Activated B cell treated with CpG ODN at 0.5 μM for 24 hours (primary cell): ENCODE measurements at regions of chr7 and their contacts with region 1.

Region 1: GRCh38 chr7:104943502-104944343 is 70.3 kb upstream of the KMT2E start:
- DNase-seq: peak; percentile 53
- ATAC-seq: peak; percentile 9
- H3K4me3 Mint-ChIP-seq: peak overlapping the region; percentile 98
- H3K27ac Mint-ChIP-seq: peak overlapping the region; percentile 100
- H3K4me1 Mint-ChIP-seq: peaks cover 83% of the 10 kb centered on the region
- H3K27me3 Mint-ChIP-seq: no peaks in the 10 kb centered on the region
- CTCF ChIP-seq: no peak

Region 2: DNA sequence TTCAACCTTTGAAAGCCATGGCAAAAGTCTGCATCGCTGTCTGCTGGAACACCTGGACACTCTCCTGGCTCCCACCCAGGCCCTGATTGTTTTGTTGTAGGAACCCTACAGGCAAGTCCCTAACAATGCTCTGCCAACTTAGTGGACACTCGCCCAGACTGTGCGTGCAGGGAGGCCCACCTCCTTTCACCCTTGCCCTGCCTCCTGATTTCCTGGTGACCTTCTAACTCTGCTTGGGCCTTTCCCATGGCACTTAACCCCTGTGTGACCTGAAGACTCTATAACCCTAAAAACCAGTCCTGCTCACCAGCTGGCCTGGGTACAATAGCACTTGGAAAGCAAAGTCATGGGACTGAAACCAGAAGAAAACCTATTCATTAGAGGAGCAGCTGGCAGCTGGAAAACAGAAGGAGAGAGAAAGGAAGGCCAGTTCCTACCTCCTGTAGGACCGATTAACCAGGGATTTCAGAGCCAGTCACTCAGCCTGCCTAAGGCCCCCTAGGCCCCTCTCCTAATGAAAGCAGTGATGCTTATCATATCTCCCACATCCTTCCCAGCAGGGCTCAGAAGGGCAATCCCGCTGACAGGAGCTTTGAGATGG is 12.4 kb before region 1 on chr7:
- CTCF ChIA-PET with region 1: interaction called, 5 read pairs
- POLR2A ChIA-PET with region 1: interaction called, 127 read pairs
- intact Hi-C with region 1: loop called (anchors 1 kb)
- DNase-seq: no peak
- ATAC-seq: no peak
- H3K4me3 Mint-ChIP-seq: no peak overlapping the region
- H3K27ac Mint-ChIP-seq: peak overlapping the region; percentile 88
- H3K4me1 Mint-ChIP-seq: peaks cover 65% of the 10 kb centered on the region
- H3K27me3 Mint-ChIP-seq: no peaks in the 10 kb centered on the region
- CTCF ChIP-seq: no peak

Region 3: DNA sequence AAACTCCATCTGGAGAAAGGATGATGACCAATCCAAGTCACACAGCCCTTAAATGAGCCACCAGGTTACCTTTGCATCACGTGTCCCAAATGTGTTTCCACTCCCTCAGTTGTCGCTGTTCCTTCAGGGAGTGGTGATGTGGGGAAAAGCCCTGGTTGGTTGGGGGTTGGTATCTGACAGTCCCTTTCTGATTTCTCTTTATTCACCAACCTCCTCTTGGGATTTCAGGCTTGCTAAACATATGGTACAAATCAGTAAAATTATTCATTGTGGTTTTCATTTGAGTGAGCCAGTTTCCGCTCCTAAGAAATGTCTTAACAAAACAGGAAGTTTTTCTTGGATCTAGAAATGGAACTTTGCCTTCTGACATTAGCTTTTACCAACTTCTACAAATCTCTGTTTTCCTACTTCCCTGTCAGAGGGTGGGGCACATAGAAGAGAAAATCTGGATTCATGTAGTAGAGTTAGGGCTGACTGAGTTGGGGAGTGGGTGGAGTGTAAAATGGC is 30.2 kb after region 1 on chr7:
- CTCF ChIA-PET with region 1: interaction called, 3 read pairs
- POLR2A ChIA-PET with region 1: interaction called, 193 read pairs
- intact Hi-C with region 1: no loop called
- DNase-seq: no peak
- ATAC-seq: peak; percentile 68
- H3K4me3 Mint-ChIP-seq: peak overlapping the region; percentile 46
- H3K27ac Mint-ChIP-seq: peak overlapping the region; percentile 83
- H3K4me1 Mint-ChIP-seq: peaks cover 45% of the 10 kb centered on the region
- H3K27me3 Mint-ChIP-seq: no peaks in the 10 kb centered on the region
- CTCF ChIP-seq: no peak

Region 4: GRCh38 chr7:106071356-106071998 is 1127.8 kb after region 1 on chr7:
- CTCF ChIA-PET with region 1: no interaction called
- POLR2A ChIA-PET with region 1: no interaction called
- intact Hi-C with region 1: loop called (anchors 5 kb)
- DNase-seq: peak; percentile 57
- ATAC-seq: peak; percentile 87
- H3K4me3 Mint-ChIP-seq: peak overlapping the region; percentile 73
- H3K27ac Mint-ChIP-seq: peak overlapping the region; percentile 98
- H3K4me1 Mint-ChIP-seq: peaks cover 100% of the 10 kb centered on the region
- H3K27me3 Mint-ChIP-seq: no peaks in the 10 kb centered on the region
- CTCF ChIP-seq: no peak